Lower leg skin (tissue), 4 donors: ENCODE measurements at regions of chr1 and their contacts with region 1.

Region 1: DNA sequence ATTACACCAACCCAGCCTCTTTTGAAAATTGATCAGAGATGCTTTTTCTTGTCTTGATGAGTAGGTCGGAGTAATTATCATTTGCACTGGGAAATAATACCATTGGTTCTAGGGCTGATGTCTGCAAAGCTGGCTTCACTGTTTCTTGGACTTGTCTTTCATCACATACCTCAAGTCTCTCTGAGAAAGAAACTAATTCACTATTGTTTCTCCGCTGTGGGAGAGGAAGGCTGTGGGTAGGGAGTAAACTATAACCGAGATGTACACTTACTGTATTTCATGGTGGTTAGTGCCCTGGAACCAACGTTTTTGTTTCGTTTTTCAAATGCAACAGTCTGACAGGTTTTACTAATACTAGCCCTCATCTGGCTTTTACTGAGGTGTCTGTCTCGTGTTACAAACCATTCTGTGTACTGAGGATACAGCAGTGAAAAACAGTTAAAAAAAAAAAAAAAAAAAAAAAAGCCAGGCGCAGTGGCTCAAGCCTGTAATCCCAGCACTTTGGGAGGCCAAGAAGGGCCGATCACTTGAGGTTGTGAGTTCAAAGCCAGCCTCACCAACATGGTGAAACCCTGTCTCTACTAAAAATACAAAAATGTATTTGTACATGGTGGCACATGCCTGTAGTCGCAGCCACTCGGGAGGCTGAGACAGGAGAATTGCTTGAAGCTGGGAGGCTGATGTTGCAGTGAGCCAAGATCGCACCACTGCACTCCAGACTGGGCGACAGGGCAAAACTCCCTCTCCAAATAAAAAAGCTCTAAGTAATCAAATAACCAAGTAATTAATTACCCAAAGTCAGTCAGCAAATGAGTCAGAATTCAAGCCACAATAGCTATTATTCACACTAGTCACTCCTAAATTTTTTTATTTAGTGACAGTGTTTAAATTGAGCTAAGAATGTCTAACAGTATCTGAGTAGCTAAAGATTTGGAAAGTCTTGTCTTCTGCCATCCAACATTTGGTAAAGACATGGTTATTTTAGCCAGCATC is 23.3 kb downstream of the TOMM20 start:
- DNase-seq: no peak
- H3K4me3 ChIP-seq: no peak overlapping the region
- CTCF ChIP-seq: no peak
- POLR2A ChIP-seq: no peak

Region 2: DNA sequence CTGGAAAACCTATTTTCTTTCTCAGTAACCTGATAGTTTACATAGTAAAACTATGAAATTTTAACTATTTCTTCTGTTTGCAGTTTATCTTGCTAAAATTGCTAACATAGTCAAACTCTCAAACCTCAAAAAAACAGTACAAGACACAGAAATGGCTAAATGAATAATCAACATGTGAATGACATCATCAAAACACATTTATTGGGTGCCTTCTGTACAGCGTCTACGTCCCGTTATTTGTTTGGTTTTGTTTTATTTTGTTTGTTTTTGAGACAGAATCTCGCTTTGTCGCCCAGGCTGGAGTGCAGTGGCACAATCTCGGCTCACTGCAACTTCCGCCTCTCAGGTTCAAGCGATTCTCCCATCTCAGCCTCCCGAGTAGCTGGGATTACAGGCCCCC is 44.5 kb after region 1 on chr1:
- intact Hi-C with region 1: loop called (anchors 1 kb)
- DNase-seq: no peak
- H3K4me3 ChIP-seq: no peak overlapping the region
- CTCF ChIP-seq: no peak
- POLR2A ChIP-seq: no peak

Region 3: GRCh38 chr1:235404195-235404594 is 298.8 kb after region 1 on chr1:
- intact Hi-C with region 1: no loop called
- DNase-seq: no peak
- H3K4me3 ChIP-seq: no peak overlapping the region
- CTCF ChIP-seq: no peak
- POLR2A ChIP-seq: no peak